Breast epithelium (tissue), 4 donors: ENCODE measurements at regions of chr1 and their contacts with region 1.

Region 1: DNA sequence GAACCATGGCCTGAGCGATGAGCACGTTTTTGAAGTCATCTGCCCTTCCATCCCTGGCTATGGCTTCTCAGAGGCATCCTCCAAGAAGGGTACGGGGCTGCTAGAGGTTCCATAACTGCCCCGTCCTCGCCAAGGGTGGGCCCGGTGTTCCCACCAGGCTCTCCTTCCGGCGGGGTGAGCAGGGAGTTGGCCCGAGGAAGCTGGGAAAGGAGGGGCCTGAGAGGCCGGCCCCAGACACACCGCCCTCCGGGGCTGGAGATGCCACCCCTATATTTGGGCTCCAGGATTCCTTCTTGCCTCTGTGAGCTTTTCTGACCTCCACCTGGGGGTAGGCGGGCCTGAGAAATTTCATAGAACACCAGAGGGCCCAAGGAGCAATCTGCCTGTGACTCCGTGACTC is 28.9 kb downstream of the EPHX1 start:
- DNase-seq: no peak
- H3K4me3 ChIP-seq: no peak overlapping the region
- H3K27ac ChIP-seq: no peak overlapping the region
- H3K4me1 ChIP-seq: no peaks in the 10 kb centered on the region
- H3K27me3 ChIP-seq: no peaks in the 10 kb centered on the region
- CTCF ChIP-seq: no peak
- POLR2A ChIP-seq: no peak

Region 2: GRCh38 chr1:225873281-225873860 is 34.6 kb after region 1 on chr1:
- intact Hi-C with region 1: loop called (anchors 1 kb)
- DNase-seq: no peak
- H3K4me3 ChIP-seq: no peak overlapping the region
- H3K27ac ChIP-seq: peak overlapping the region; percentile 3 to 96
- H3K4me1 ChIP-seq: peaks cover 0 to 15% of the 10 kb centered on the region in 2 donors
- H3K27me3 ChIP-seq: no peaks in the 10 kb centered on the region
- CTCF ChIP-seq: no peak
- POLR2A ChIP-seq: no peak